ENCODE measurements at regions of chr10 and their contacts with region 1.

Region 1: GRCh38 chr10:98474628-98475027 is 27.9 kb upstream of the HPS1 start:
- DNase-seq: no peak
- ATAC-seq: no peak

Region 2: DNA sequence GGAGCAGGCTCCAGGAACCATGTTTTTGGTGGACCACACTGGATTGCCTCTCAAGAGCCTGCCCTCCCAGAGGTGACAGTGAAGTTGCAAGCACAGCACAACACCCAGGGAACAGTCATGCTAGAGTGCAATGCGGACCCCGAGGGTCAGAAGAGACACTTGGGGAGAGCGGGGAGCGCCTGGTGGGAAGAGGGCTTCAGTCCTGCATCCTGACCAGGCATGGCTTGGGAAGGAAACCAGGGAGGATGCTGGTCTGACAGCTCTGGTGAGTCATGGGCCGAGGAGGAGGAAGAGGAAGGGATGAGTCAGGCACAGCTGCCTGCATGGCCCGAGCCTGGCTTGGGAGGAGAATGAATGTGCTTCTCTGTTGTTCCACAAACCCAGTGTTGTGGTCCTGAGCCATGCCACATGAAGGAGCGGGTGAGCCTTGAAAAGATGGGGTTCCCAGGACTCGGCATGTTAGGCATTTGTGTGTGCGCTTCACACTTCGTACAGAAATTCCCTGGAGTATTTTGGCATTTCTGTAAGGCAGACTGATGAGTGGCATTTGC is 931.5 kb before region 1 on chr10:
- intact Hi-C with region 1: loop called (anchors 10 kb)
- DNase-seq: peak; percentile 85
- ATAC-seq: peak; percentile 89

Region 3: GRCh38 chr10:98488669-98489426 is 14.2 kb after region 1 on chr10:
- intact Hi-C with region 1: no loop called
- DNase-seq: peak; percentile 60
- ATAC-seq: peak; percentile 60

Measured in sciatic nerve (tissue), 2 donors.